ENCODE measurements at regions of chr3 and their contacts with region 1.

Region 1: GRCh38 chr3:141875374-141875892 is 1.0 kb upstream of the ATP1B3 start:
- DNase-seq: no peak
- H3K4me3 ChIP-seq: peak overlapping the region; percentile 82
- CTCF ChIP-seq: peak; percentile 96

Region 2: DNA sequence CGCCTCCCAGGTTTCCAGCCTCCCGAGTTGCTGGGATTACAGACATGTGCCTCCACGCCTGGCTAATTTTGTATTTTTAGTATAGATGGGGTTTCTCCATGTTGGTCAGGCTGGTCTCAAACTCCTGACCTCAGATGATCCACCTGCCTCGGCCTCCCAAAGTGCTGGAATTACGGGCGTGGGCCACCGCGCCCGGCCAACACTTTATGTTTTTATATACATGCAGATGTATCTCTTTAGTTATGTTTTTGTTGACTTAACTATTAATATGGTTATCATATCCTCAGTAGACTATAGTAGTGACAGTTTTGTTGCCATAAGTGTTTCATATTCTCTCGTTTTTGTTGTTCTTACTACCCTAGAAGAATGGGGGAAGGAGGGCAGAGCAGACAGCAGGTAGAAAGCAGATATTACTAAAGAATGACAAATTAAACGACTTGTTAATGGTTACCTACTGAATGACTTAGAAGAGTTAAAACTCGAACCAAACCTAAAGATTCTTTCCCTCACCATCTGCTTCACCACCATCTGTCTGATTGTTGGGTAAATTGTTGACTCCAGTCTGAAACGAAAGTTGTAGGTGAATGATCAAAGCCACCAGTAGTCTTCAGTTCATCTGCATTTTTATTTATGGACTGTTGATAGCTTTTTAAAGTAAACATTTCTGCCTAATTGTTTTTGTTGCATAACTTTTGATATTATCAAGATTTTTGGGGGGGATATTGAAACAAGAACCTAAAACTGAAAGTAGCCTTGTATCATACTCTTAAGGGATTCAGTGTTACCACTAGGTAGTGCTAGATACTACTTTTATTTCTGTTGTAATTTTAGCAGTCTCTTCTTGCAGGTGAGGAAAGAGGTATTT is 299.3 kb before region 1 on chr3:
- CTCF ChIA-PET with region 1: interaction called, 18 read pairs
- POLR2A ChIA-PET with region 1: no interaction called
- DNase-seq: no peak
- H3K4me3 ChIP-seq: no peak overlapping the region
- CTCF ChIP-seq: peak; percentile 51

Region 3: DNA sequence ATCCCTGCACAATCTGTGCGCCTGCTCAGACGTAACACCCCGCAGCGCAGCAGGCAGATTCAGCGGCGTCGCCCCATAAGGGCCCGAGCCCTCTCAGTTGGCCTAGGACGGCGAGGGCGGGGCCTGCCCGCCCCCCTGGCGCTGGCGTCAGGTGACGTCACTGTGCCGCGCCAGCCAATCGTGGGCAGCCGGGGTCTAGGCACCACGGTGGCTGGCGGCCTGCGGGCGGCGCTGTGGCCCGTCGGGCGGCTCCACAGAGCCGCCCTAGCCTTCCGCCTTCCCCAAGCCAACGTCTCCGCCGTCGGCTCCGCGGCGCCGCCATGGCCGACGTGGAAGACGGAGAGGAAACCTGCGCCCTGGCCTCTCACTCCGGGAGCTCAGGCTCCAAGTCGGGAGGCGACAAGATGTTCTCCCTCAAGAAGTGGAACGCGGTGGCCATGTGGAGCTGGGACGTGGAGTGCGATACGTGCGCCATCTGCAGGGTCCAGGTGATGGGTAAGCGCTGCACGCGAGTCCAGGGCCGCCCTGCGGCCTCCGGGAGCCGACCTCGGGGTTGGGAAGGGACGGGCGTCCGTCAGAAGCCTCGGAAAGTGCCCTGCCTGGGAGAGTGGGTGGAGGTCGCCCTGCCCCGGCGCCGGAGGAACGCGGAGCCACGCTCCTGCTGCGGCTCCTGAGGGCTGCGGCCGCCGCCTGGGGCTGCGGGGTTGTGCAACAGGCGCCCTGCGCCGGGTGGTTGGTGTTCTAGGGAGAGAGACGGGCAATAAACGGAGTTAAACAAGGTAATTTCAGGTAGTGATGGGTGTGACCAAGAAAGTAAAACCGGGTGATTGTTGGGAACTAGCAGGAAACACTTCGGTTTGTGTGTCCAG is 137.2 kb before region 1 on chr3 and contains the start of gene RNF7:
- CTCF ChIA-PET with region 1: interaction called, 50 read pairs
- POLR2A ChIA-PET with region 1: interaction called, 7 read pairs
- DNase-seq: peak; percentile 49
- H3K4me3 ChIP-seq: peak within 1 kb of the TSS; percentile 98
- CTCF ChIP-seq: peak; percentile 79

Region 4: GRCh38 chr3:141853081-141853601 is 22.3 kb before region 1 on chr3:
- CTCF ChIA-PET with region 1: interaction called, 13 read pairs
- POLR2A ChIA-PET with region 1: no interaction called
- DNase-seq: no peak
- H3K4me3 ChIP-seq: no peak overlapping the region
- CTCF ChIP-seq: no peak

Region 5: DNA sequence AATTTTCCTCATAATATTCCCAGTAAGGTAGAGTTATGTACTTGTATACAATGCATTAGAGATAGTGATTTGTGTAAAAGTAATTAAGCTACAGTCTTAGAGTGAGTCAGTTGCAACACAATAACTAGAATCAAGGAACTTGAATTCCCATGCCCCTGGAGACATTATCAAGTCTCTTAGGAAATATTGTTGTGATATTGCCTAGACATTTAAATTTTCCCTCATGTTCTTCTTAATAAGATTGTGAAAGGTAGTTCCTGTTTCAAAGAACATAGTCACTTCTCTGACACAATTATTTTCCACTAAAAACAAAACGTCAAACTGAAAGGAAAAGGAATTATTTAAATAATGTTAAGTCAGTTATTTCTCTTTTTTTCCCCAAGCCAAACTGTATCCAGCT is 11.9 kb before region 1 on chr3:
- CTCF ChIA-PET with region 1: interaction called, 34 read pairs
- POLR2A ChIA-PET with region 1: no interaction called
- DNase-seq: no peak
- H3K4me3 ChIP-seq: no peak overlapping the region
- CTCF ChIP-seq: no peak

Region 6: GRCh38 chr3:141887051-141887450 is 11.6 kb after region 1 on chr3:
- CTCF ChIA-PET with region 1: interaction called, 19 read pairs
- POLR2A ChIA-PET with region 1: no interaction called
- DNase-seq: no peak
- H3K4me3 ChIP-seq: no peak overlapping the region
- CTCF ChIP-seq: no peak

Region 7: GRCh38 chr3:141894524-141895178 is 19.2 kb after region 1 on chr3:
- CTCF ChIA-PET with region 1: interaction called, 25 read pairs
- POLR2A ChIA-PET with region 1: interaction called, 8 read pairs
- DNase-seq: peak; percentile 37
- H3K4me3 ChIP-seq: no peak overlapping the region
- CTCF ChIP-seq: no peak

Region 8: DNA sequence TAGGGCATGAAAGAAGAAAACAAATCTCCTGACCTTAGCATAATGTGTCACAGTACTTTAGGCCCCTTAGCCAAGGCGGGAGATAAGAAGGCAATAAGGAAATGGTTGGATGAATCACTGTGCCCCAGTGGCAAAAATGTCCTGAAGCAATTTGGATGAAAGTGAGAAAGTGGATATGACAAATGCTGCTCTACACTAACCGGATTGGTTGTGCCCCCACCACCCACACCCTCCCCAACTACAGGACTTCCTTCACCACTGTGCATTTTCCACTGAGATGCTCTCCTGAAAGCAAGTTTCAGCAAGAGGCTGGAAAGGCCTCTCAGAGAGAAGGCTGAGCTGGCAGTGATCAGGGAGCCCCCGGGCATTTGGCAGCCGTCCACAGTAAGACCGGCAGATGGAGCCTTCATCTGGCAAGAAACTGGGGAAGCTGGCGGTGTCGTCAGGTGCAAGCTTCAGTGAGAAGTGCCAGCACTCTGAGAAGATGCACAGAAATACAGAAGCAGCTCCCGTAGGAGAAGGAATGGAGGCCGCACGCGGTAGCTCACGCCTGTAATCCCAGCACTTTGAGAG is 64.9 kb after region 1 on chr3:
- CTCF ChIA-PET with region 1: no interaction called
- POLR2A ChIA-PET with region 1: no interaction called
- DNase-seq: no peak
- H3K4me3 ChIP-seq: no peak overlapping the region
- CTCF ChIP-seq: no peak

Measured in AG04449 (cell line).